ENCODE measurements at regions of chr20 and their contacts with region 1.

Region 1: GRCh38 chr20:55269913-55270312 is 735.4 kb downstream of the CBLN4 start:
- DNase-seq: no peak

Region 2: GRCh38 chr20:55329108-55329507 is 59.2 kb after region 1 on chr20:
- intact Hi-C with region 1: loop called (anchors 10 kb)
- DNase-seq: no peak

Region 3: DNA sequence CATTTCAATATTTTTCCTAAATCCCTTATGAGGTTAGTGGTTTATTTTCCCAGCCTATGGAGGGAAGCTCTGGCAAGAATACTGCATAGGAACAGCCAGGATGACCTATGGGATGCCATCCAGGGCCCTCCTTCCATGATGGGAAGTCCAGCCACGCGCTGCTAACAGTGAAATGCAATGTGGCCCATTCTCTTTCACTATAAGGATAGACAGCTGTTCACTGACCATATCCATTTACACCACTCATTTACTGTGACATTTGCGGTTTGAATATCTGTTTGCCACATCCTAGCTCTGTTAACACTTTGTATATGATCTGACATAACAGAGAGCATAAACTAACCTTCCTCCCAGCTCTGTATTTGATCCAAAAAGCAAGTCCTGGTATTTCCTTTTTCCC is 263.7 kb after region 1 on chr20:
- intact Hi-C with region 1: no loop called
- DNase-seq: no peak

Measured in posterior cingulate gyrus (tissue), 11 donors.